ENCODE measurements at regions of chr11 and their contacts with region 1.

Region 1: GRCh38 chr11:33161120-33162005 is at the start of gene CSTF3:
- DNase-seq: peak; percentile 99
- H3K4me3 Mint-ChIP-seq: peak within 1 kb of the TSS; percentile 100
- H3K27ac Mint-ChIP-seq: peak within 1 kb of the TSS; percentile 99
- H3K4me1 Mint-ChIP-seq: peaks cover 42% of the 10 kb centered on the region
- H3K27me3 Mint-ChIP-seq: no peaks in the 10 kb centered on the region
- total RNA-seq, gene CSTF3: 26.5 to 27.3 TPM

Region 2: GRCh38 chr11:32583459-32584271 is 577.7 kb before region 1 on chr11 and contains the start of gene EIF3M:
- CTCF ChIA-PET with region 1: no interaction called
- intact Hi-C with region 1: loop called (anchors 1 kb)
- DNase-seq: peak; percentile 97
- H3K4me3 Mint-ChIP-seq: peak within 1 kb of the TSS; percentile 95
- H3K27ac Mint-ChIP-seq: peak within 1 kb of the TSS; percentile 94
- H3K4me1 Mint-ChIP-seq: peaks cover 38% of the 10 kb centered on the region
- H3K27me3 Mint-ChIP-seq: no peaks in the 10 kb centered on the region
- total RNA-seq, gene EIF3M: 342 to 358 TPM

Region 3: DNA sequence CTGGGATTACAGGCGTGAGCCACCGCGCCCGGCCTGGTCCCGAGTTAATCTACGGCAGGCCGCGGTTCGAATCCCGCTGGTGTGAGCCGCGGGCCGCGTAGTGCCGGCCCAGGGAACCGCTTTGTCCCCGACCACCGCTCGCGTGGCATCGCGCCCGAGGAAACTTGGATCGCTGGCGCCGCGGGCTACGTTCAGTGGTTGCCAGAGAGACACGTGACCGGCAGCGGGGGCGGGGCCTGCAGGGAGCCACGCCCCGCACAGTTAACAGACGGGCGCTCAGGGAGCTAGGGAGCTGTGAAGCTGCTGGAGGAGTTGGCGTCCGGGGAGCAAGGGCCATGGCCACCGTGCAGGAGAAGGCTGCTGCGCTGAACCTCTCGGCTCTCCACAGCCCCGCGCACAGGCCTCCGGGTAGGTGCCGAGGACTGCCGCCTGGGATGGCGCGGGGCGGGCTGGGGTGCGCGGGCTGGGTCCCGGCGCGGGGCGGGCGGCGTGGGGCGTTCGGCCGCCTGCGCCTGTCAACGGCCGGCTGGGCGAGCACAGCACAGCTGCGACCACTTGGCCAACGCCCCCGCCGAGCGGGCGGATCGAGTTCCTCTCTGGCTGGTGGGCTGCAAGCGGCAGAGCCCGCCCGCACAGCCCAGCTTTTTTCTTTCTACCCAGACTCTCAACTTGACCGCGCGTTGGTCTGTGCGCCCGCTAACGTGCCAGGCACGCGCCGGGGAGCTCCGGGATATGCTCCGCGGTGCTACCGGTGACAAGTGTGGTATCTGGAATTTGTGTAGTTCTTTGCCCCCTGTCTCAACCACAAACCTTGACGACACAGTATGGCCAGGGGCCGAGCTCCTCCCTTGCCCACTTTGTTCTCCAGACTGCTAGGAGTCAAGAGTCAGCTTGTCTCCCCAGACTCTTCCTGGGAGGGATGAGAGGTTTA is 145.5 kb before region 1 on chr11 and contains the start of gene DEPDC7:
- CTCF ChIA-PET with region 1: no interaction called
- intact Hi-C with region 1: loop called (anchors 1 kb)
- DNase-seq: peak; percentile 84
- H3K4me3 Mint-ChIP-seq: peak within 1 kb of the TSS; percentile 84
- H3K27ac Mint-ChIP-seq: no peak within 1 kb of the TSS
- H3K4me1 Mint-ChIP-seq: peaks cover 53% of the 10 kb centered on the region
- H3K27me3 Mint-ChIP-seq: peaks cover 9% of the 10 kb centered on the region
- total RNA-seq, gene DEPDC7: 2.2 to 2.5 TPM

Region 4: DNA sequence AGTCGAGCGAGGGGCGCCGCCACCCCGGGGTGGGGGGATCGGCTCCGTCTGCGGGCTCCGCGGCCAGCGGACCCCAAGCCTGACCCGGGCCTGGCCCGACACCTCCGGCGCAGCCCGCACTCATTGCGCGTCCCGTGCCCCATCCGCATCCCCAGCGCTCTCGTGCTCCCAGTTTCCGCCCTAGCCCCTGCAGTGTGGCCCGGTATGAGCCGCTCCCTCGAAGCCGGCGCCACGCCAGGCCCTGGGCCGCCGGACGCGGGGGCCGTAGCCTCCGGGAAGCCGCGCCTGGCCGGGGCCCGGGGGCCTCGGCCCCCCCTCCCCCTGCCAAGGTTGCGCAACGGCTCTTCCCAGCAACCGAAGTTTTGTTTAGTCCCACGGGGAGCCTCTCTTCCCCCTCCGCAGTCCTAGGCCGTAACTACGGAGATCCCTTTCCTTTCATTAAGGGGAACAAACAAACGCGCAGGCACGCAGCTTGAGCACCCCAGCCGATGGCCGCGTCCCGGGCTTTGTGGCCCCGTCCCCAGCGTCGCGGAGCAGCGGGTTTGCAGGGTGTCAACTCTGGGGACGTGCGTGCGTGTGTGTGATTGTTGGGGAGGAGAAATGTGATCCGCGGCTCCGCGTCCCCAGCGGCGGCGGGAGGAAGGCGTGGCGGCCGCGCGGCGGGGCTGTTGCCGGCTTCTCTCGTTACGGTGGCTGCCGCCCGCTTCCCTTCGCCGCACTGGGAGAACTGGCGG is 96.7 kb after region 1 on chr11:
- CTCF ChIA-PET with region 1: no interaction called
- intact Hi-C with region 1: loop called (anchors 1 kb)
- DNase-seq: peak; percentile 77
- H3K4me3 Mint-ChIP-seq: peak overlapping the region; percentile 91
- H3K27ac Mint-ChIP-seq: peak overlapping the region; percentile 93
- H3K4me1 Mint-ChIP-seq: peaks cover 37% of the 10 kb centered on the region
- H3K27me3 Mint-ChIP-seq: no peaks in the 10 kb centered on the region

Region 5: GRCh38 chr11:33687733-33688479 is 526.5 kb after region 1 on chr11:
- CTCF ChIA-PET with region 1: no interaction called
- intact Hi-C with region 1: loop called (anchors 2 kb)
- DNase-seq: peak; percentile 36
- H3K4me3 Mint-ChIP-seq: no peak overlapping the region
- H3K27ac Mint-ChIP-seq: no peak overlapping the region
- H3K4me1 Mint-ChIP-seq: peaks cover 3% of the 10 kb centered on the region
- H3K27me3 Mint-ChIP-seq: peaks cover 12% of the 10 kb centered on the region

Region 6: DNA sequence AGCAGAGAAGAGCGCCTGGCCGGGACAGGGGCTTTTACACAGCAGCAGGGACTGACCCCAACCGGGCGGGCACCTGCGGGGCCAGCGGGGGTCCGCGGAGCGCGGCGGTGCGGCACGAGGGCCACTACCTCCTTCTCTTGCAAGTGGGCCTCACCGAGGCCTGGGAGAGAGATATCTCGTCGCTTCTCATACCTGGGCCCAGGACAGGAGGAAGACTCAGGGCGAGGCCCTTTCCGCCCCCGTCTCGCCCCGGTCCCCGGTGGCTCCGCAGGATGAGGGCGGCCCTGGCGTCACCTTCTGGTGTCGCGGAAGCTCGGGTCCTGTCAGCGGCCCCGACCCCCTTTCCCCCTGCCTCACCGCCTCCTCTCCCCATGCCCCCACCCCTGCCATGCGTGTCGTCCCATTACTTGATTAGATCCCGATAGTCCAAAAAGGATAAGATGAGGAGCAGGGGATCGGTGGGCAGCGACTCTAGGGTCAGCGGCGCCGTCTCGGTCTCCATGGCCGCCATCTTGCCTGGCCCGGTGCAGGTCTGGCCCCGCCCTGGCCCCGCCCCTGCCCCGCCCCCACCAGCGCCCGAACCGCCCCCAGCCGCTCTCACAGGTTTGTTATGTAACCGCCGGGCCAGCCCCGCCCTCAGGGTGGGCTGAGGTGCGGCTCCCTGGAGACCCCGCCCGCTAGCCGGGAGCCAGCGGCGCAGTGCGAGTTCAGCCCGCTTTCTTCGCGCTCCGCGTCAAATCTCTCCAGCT is 612.8 kb after region 1 on chr11 and contains the start of gene FBXO3:
- CTCF ChIA-PET with region 1: no interaction called
- intact Hi-C with region 1: loop called (anchors 1 kb)
- DNase-seq: peak; percentile 82
- H3K4me3 Mint-ChIP-seq: peak within 1 kb of the TSS; percentile 90
- H3K27ac Mint-ChIP-seq: peak within 1 kb of the TSS; percentile 85
- H3K4me1 Mint-ChIP-seq: peaks cover 40% of the 10 kb centered on the region
- H3K27me3 Mint-ChIP-seq: peaks cover 12% of the 10 kb centered on the region
- total RNA-seq, gene FBXO3: 12.2 to 12.9 TPM

Region 7: GRCh38 chr11:34105079-34105956 is 944.0 kb after region 1 on chr11 and contains the start of gene NAT10:
- CTCF ChIA-PET with region 1: no interaction called
- intact Hi-C with region 1: loop called (anchors 1 kb)
- DNase-seq: peak; percentile 98
- H3K4me3 Mint-ChIP-seq: peak within 1 kb of the TSS; percentile 94
- H3K27ac Mint-ChIP-seq: peak within 1 kb of the TSS; percentile 94
- H3K4me1 Mint-ChIP-seq: peaks cover 51% of the 10 kb centered on the region
- H3K27me3 Mint-ChIP-seq: no peaks in the 10 kb centered on the region
- total RNA-seq, gene NAT10: 91.0 to 93.3 TPM

Measured in activated naive CD4-positive, alpha-beta T cell treated with anti-CD3 and anti-CD28 coated beads for 36 hours (primary cell).